Prostate gland (tissue), 2 donors: ENCODE measurements at regions of chr11 and their contacts with region 1.

Region 1: GRCh38 chr11:58654079-58654907 is 31.8 kb downstream of the CNTF start:
- DNase-seq: peak; percentile 69
- H3K4me3 ChIP-seq: no peak overlapping the region
- H3K27ac ChIP-seq: no peak overlapping the region
- H3K4me1 ChIP-seq: no peaks in the 10 kb centered on the region
- H3K27me3 ChIP-seq: no peaks in the 10 kb centered on the region
- CTCF ChIP-seq: peak; percentile 53 to 85 (median 84)
- POLR2A ChIP-seq: no peak

Region 2: DNA sequence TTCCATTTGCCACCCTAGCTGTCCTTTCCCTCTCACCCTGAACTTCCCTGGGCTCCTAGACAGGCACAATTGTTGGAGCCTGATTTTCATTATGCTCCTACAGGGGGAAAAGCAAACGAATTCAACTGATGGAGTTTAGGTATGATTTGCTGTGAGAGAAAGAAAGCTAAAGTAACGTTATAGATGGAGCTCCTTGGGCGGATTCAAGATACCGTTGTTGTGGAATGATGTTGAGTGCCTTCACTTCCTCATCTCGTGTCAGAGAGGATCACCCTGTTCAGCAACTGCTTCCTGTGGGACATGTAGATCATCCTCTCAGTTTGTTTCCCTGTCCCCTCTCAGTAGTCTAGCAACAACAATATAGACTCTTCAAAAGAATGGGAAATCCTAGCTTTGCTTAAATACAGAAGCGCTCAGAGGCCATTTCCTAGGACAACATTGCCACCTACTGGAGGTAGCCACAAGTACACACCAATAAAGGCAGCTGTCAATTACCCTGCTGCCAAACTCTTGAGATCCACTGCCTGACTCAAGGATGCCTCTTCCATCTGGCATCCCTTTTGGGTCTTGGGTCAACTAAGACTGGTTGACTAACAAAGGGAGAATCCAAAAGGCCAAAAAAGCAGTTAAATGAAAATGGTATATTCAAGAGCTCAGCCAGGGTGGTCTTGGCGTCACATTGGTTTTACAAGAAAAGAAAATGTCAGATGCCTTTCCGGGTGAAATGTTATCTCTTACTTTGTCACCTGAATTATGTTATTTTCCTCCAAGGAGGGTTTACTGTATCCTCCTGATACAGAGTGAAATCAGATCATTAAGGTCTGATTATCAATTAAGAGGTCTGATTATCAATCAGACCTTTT is 504.1 kb after region 1 on chr11:
- intact Hi-C with region 1: loop called (anchors 2 kb)
- DNase-seq: peak; percentile 60
- H3K4me3 ChIP-seq: no peak overlapping the region
- H3K27ac ChIP-seq: no peak overlapping the region
- H3K4me1 ChIP-seq: no peaks in the 10 kb centered on the region
- H3K27me3 ChIP-seq: no peaks in the 10 kb centered on the region
- CTCF ChIP-seq: peak; percentile 44 to 81 (median 72)
- POLR2A ChIP-seq: no peak